Posterior vena cava (tissue), 2 donors: ENCODE measurements at regions of chr5 and their contacts with region 1.

Region 1: GRCh38 chr5:115641948-115642347 is 16.1 kb upstream of the TMED7 start:
- DNase-seq: no peak

Region 2: DNA sequence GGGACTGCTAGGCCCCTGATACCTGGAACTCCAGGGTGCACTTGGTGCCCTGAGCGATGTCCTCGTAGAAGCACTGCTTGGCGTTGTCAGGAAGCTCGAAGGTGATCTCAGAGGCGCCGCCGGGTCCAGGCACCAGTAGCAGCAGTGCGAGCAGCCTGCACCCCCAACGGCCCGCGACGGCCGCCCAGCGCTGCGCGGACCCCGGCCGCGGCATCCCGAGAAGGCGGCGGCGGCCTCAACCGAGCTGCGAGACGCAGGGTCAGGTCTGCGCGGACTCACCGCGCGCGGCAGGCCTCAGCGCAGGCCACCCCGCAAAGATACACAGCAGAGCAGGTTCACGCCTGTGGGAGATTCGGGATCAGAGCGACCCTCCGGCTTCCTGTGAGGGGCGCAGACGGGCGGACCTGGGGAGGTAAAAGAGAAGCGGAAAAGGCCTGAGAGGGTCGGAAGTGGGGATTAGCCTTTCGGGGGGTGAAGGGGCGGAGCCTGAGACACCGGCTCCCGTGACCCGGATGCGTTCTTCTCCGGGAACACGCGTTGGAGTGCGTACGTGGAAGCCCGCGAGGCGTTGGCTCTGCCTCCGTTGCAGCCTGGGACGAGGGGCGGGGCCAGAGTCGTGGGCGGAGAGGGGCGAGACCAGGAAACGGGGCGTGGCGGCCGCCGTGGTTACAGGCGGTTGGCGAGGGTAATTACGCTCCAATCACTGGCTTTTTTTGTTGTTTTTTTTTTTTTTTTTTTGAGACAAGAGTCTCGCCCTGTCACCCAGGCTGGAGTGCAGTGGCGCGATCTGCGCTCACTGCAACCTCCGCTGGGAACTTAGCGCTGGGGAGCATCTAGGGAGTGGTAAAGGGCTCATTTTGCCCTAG is 16.1 kb before region 1 on chr5 and contains the start of gene TMED7:
- intact Hi-C with region 1: no loop called
- DNase-seq: peak; percentile 100
- total RNA-seq, gene TMED7: 82.1 to 98.9 TPM

Region 3: GRCh38 chr5:115686051-115686737 is 44.2 kb after region 1 on chr5:
- intact Hi-C with region 1: no loop called
- DNase-seq: no peak

Region 4: DNA sequence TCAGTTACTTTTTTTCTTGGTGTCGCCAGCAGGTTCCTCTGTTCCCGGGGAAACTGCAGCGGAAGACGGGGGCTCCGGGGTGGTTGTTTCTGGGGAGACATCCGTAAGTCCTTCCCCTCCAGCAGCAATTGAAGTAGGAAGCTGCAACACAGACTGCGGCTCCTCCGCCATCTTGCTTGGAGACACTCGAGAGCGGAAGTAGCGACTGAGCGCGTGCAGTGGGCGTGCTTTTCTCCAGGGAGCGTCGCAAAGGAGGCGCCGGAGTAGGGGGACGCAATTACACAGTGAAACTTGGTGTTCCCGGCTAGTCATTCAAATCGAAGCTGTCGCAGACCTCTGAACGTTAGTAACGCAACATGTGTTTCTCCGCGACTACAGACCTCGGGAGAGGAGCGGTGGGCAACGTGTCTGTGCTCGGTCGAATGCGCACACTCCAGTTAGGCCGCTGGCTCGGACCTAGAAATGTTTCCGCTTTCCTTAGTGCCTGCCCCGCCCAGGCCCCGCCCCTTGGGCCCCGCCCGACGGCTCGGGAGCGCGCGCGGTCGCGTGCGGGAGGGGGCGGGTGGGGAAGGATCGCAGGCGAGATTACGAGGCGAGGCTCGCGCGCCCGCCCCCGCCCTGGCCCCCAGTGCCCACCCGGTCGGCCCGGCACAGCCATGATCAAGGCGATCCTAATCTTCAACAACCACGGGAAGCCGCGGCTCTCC is 199.6 kb after region 1 on chr5 and contains the starts of genes AP3S1 and ATG12:
- intact Hi-C with region 1: no loop called
- DNase-seq: peak; percentile 96
- total RNA-seq, gene AP3S1: 91.0 to 92.1 TPM
- total RNA-seq, gene ATG12: 41.2 to 42.0 TPM

Region 5: GRCh38 chr5:116068028-116068632 is 426.2 kb after region 1 on chr5:
- intact Hi-C with region 1: loop called in 1 of 2 experiments (anchors 10 kb)
- DNase-seq: no peak